ENCODE measurements at regions of chr3 and their contacts with region 1.

Region 1: DNA sequence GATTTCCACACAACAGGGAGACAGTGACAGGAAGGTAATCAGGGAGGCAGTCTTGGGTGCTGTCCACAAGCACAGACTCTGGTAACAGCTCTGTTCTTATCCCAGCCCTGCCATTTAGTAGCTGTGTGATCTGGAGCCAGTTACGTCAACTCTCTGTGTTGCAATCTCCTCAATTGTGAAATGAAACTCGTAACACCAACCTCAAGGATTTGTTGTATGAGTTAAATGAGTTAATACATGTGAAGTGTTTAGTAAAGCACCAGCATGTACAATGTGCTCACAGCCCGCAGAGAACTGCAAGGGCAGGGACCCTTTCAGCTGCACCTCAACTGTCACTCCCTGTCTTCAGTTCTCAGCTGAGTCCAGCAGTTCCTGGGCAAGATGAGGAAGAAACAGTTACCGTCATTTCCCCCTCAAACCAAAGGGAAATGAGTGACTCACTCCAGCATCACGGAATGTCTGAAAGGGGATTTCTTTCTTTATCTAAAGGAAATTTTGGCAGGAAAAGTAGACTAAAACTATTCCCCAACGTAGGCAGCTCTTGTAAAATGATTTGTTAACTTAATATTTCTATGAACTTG is 39.9 kb upstream of the MB21D2 start:
- DNase-seq: peak; percentile 28
- H3K4me3 Mint-ChIP-seq: no peak overlapping the region
- H3K27ac Mint-ChIP-seq: no peak overlapping the region
- H3K4me1 Mint-ChIP-seq: peaks cover 24% of the 10 kb centered on the region
- H3K27me3 Mint-ChIP-seq: no peaks in the 10 kb centered on the region

Region 2: GRCh38 chr3:192899540-192899982 is 58.0 kb before region 1 on chr3:
- CTCF ChIA-PET with region 1: no interaction called
- POLR2A ChIA-PET with region 1: no interaction called
- intact Hi-C with region 1: loop called (anchors 1 kb)
- DNase-seq: peak; percentile 37
- H3K4me3 Mint-ChIP-seq: no peak overlapping the region
- H3K27ac Mint-ChIP-seq: peak overlapping the region; percentile 90
- H3K4me1 Mint-ChIP-seq: peaks cover 54% of the 10 kb centered on the region
- H3K27me3 Mint-ChIP-seq: peaks cover 8% of the 10 kb centered on the region

Region 3: GRCh38 chr3:192943393-192943792 is 14.1 kb before region 1 on chr3:
- CTCF ChIA-PET with region 1: no interaction called
- POLR2A ChIA-PET with region 1: no interaction called
- intact Hi-C with region 1: no loop called
- DNase-seq: no peak
- H3K4me3 Mint-ChIP-seq: no peak overlapping the region
- H3K27ac Mint-ChIP-seq: no peak overlapping the region
- H3K4me1 Mint-ChIP-seq: no peaks in the 10 kb centered on the region
- H3K27me3 Mint-ChIP-seq: peaks cover 3% of the 10 kb centered on the region

Measured in activated CD4-positive, alpha-beta memory T cell treated with anti-CD3 and anti-CD28 coated beads for 36 hours (primary cell).